ENCODE measurements at regions of chr15 and their contacts with region 1.

Region 1: DNA sequence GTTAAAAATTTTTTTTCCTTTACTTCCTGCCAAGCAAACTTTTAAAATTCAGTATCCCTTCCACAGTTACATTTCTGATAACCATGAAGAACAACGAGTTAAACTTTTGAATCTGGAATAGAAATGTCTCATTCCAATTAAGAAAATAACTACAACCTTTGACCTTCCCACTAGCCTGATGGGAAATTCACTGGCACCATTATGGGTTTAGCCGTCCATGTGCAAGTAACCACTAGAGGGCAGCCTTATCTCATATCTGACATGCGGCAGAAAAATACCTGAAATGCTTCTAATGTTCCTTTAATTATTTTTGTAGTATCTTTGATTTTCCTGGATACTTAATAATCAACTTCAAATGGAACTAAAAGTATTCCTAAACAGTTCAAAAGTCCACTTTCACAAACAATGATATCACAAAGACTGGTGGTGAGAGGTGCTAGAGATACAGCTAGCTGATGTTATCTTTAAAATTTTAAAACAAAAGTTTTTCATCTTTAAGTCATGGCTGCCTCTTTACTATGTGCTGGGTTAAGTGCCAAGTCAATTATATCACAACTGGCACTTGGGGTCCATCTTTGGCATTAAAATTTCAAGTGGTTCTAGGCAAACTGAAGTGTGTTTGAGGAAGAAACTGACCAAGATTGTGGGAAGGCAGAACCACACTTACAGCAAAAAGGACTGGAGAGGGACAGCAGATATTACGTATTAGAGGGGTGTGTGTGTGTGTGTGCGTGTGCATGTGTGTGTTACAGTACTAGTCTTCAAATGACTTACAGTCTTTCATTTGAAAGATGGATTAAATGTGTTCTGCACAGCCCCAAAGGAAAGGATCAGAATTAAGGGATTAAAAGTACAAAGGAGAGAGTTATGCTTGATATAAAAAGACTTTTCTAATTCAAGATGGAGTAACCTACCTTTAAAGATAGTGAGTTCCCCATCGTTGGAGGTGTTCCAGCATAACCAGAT is 107.1 kb upstream of the ICE2 start:
- DNase-seq: peak in 1 of 2 donors; percentile 91
- ATAC-seq: peak; percentile 18 to 59 (median 33)
- H3K4me3 ChIP-seq: no peak overlapping the region
- H3K4me3 Mint-ChIP-seq: peak overlapping the region; percentile 97
- H3K27ac ChIP-seq: peak overlapping the region; percentile 68
- H3K27ac Mint-ChIP-seq: peak overlapping the region; percentile 93
- H3K4me1 ChIP-seq: peaks cover 31% of the 10 kb centered on the region
- H3K4me1 Mint-ChIP-seq: peaks cover 89 to 95% of the 10 kb centered on the region in 2 donors
- H3K27me3 ChIP-seq: no peaks in the 10 kb centered on the region
- H3K27me3 Mint-ChIP-seq: no peaks in the 10 kb centered on the region
- CTCF ChIP-seq: peak; percentile 92

Region 2: GRCh38 chr15:60507596-60508424 is 78.2 kb before region 1 on chr15:
- intact Hi-C with region 1: loop called (anchors 2 kb)
- DNase-seq: peak in 1 of 2 donors; percentile 89
- ATAC-seq: peak; percentile 93 to 94 (median 93)
- H3K4me3 ChIP-seq: no peak overlapping the region
- H3K4me3 Mint-ChIP-seq: peak overlapping the region; percentile 38
- H3K27ac ChIP-seq: peak overlapping the region; percentile 2
- H3K27ac Mint-ChIP-seq: peak overlapping the region; percentile 85 to 86
- H3K4me1 ChIP-seq: peaks cover 3% of the 10 kb centered on the region
- H3K4me1 Mint-ChIP-seq: peaks cover 25 to 50% of the 10 kb centered on the region in 2 donors
- H3K27me3 ChIP-seq: no peaks in the 10 kb centered on the region
- H3K27me3 Mint-ChIP-seq: no peaks in the 10 kb centered on the region
- CTCF ChIP-seq: peak; percentile 91

Region 3: GRCh38 chr15:60526127-60526625 is 59.9 kb before region 1 on chr15:
- intact Hi-C with region 1: no loop called
- DNase-seq: peak in 1 of 2 donors; percentile 73
- ATAC-seq: peak; percentile 19 to 63 (median 33)
- H3K4me3 ChIP-seq: no peak overlapping the region
- H3K4me3 Mint-ChIP-seq: peak overlapping the region; percentile 21
- H3K27ac ChIP-seq: peak overlapping the region; percentile 43
- H3K27ac Mint-ChIP-seq: peak overlapping the region; percentile 86 to 87
- H3K4me1 ChIP-seq: peaks cover 22% of the 10 kb centered on the region
- H3K4me1 Mint-ChIP-seq: peaks cover 65 to 71% of the 10 kb centered on the region in 2 donors
- H3K27me3 ChIP-seq: no peaks in the 10 kb centered on the region
- H3K27me3 Mint-ChIP-seq: no peaks in the 10 kb centered on the region
- CTCF ChIP-seq: no peak

Region 4: DNA sequence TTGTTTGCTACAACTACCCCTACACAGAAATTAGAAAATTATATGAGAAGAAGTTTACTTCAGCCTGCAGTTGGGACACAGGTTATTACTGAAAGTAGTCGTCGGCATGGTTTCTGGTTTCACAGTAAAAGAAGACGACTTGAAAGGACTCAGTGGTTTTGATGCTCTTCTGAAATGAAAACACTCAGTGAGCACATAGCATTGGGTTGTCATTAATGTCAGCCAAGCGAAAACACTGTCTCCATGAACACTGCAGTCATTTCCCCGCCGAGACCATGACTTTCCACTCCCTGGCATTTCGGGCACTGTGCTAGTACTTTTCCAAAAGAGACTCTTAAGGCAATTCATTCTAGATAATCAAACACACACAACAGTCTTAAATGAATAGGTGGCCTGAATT is 37.9 kb before region 1 on chr15:
- intact Hi-C with region 1: loop called (anchors 2 kb)
- DNase-seq: peak in 1 of 2 donors; percentile 68
- ATAC-seq: peak; percentile 11 to 40 (median 33)
- H3K4me3 ChIP-seq: no peak overlapping the region
- H3K4me3 Mint-ChIP-seq: peak overlapping the region; percentile 88
- H3K27ac ChIP-seq: peak overlapping the region; percentile 87
- H3K27ac Mint-ChIP-seq: peak overlapping the region; percentile 93 to 95
- H3K4me1 ChIP-seq: peaks cover 61% of the 10 kb centered on the region
- H3K4me1 Mint-ChIP-seq: peaks cover 95% of the 10 kb centered on the region in 2 donors
- H3K27me3 ChIP-seq: no peaks in the 10 kb centered on the region
- H3K27me3 Mint-ChIP-seq: no peaks in the 10 kb centered on the region
- CTCF ChIP-seq: no peak

Region 5: GRCh38 chr15:60568301-60568742 is 17.7 kb before region 1 on chr15:
- intact Hi-C with region 1: loop called (anchors 1 kb)
- DNase-seq: peak in 1 of 2 donors; percentile 41
- ATAC-seq: peak in 2 of 3 donors; percentile 6 to 8
- H3K4me3 ChIP-seq: no peak overlapping the region
- H3K4me3 Mint-ChIP-seq: peak overlapping the region; percentile 77
- H3K27ac ChIP-seq: peak overlapping the region; percentile 65
- H3K27ac Mint-ChIP-seq: peak overlapping the region; percentile 78 to 88
- H3K4me1 ChIP-seq: peaks cover 63% of the 10 kb centered on the region
- H3K4me1 Mint-ChIP-seq: peaks cover 91 to 92% of the 10 kb centered on the region in 2 donors
- H3K27me3 ChIP-seq: no peaks in the 10 kb centered on the region
- H3K27me3 Mint-ChIP-seq: no peaks in the 10 kb centered on the region
- CTCF ChIP-seq: no peak

Region 6: DNA sequence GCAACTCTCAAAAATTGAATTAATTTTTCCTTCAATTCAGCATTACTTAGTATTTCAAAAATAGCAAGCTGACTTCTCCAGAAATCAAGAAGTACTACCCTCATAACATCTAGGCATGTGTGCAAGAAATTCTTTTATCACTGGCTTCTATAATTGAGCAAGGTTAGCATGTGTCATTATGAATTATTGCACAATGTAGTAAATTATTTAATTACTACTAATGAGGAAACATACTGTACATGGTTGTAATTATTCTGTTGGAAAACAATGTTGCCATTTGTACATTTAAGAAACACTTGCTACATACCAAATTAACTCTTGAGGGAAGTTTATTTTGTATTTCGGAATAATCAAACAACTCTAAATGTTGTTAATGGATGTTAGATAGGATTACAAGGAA is 15.1 kb after region 1 on chr15:
- intact Hi-C with region 1: no loop called
- DNase-seq: no peak
- ATAC-seq: no peak
- H3K4me3 ChIP-seq: no peak overlapping the region
- H3K4me3 Mint-ChIP-seq: no peak overlapping the region
- H3K27ac ChIP-seq: no peak overlapping the region
- H3K27ac Mint-ChIP-seq: no peak overlapping the region
- H3K4me1 ChIP-seq: no peaks in the 10 kb centered on the region
- H3K4me1 Mint-ChIP-seq: peaks cover 0 to 7% of the 10 kb centered on the region in 2 donors
- H3K27me3 ChIP-seq: no peaks in the 10 kb centered on the region
- H3K27me3 Mint-ChIP-seq: peaks cover 0 to 7% of the 10 kb centered on the region in 2 donors
- CTCF ChIP-seq: no peak

Region 7: DNA sequence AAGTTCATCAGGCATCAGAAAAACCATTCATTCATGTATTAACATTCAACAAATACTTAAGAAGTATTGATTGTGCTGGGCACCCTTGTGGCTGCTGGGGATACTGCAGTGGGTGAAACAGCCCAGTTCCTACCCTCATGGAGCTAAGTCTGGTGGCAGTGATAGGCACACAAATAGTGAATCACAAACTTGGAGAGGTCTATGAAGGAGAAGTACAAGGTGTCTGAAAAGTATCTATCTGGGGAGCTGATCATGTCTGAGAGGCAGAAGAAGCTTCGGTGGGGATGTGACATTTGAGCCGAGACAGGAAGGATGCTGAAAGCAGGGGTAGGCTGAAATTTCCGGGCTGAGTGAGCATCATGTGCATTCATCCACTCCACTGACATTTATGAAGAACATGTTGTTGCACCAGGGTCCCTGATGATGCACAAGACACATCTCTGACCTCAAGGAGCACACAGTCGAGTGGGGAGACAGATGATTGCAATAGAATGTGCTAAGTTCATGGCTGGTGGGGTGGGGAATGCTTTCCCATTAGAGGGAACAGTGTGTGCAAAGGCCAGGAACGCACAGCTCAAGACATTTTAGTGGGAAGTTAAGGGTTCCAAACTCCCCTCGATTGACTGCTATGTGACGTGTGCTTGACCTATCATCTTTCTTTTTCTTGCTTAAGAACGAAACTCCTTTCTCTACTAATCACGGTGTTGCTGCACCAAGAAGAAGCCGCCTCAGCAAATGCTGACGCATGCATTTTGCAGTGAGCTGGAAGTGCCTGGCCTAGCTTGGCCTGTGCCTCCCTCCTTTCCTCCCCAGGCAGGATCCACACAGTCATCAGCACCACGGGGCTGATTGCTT is 202.0 kb after region 1 on chr15:
- intact Hi-C with region 1: no loop called
- DNase-seq: peak in 1 of 2 donors; percentile 66
- ATAC-seq: peak in 1 of 3 donors; percentile 64
- H3K4me3 ChIP-seq: no peak overlapping the region
- H3K4me3 Mint-ChIP-seq: no peak overlapping the region
- H3K27ac ChIP-seq: no peak overlapping the region
- H3K27ac Mint-ChIP-seq: no peak overlapping the region
- H3K4me1 ChIP-seq: no peaks in the 10 kb centered on the region
- H3K4me1 Mint-ChIP-seq: peaks cover 9 to 15% of the 10 kb centered on the region in 2 donors
- H3K27me3 ChIP-seq: no peaks in the 10 kb centered on the region
- H3K27me3 Mint-ChIP-seq: no peaks in the 10 kb centered on the region
- CTCF ChIP-seq: peak; percentile 44

Region 8: GRCh38 chr15:60840306-60840702 is 254.3 kb after region 1 on chr15:
- intact Hi-C with region 1: loop called (anchors 1 kb)
- DNase-seq: peak in 1 of 2 donors; percentile 53
- ATAC-seq: peak in 1 of 3 donors; percentile 2
- H3K4me3 ChIP-seq: no peak overlapping the region
- H3K4me3 Mint-ChIP-seq: peak overlapping the region; percentile 90
- H3K27ac ChIP-seq: peak overlapping the region; percentile 81
- H3K27ac Mint-ChIP-seq: peak overlapping the region; percentile 87 to 95
- H3K4me1 ChIP-seq: peaks cover 67% of the 10 kb centered on the region
- H3K4me1 Mint-ChIP-seq: peaks cover 72 to 74% of the 10 kb centered on the region in 2 donors
- H3K27me3 ChIP-seq: no peaks in the 10 kb centered on the region
- H3K27me3 Mint-ChIP-seq: no peaks in the 10 kb centered on the region
- CTCF ChIP-seq: no peak

Region 9: GRCh38 chr15:61474796-61475195 is 888.8 kb after region 1 on chr15:
- intact Hi-C with region 1: no loop called
- DNase-seq: no peak
- ATAC-seq: no peak
- H3K4me3 ChIP-seq: no peak overlapping the region
- H3K4me3 Mint-ChIP-seq: no peak overlapping the region
- H3K27ac ChIP-seq: no peak overlapping the region
- H3K27ac Mint-ChIP-seq: no peak overlapping the region
- H3K4me1 ChIP-seq: no peaks in the 10 kb centered on the region
- H3K4me1 Mint-ChIP-seq: no peaks in the 10 kb centered on the region
- H3K27me3 ChIP-seq: no peaks in the 10 kb centered on the region
- H3K27me3 Mint-ChIP-seq: peaks cover 11 to 25% of the 10 kb centered on the region in 2 donors
- CTCF ChIP-seq: no peak

Region 10: GRCh38 chr15:61834076-61834697 is 1248.2 kb after region 1 on chr15:
- intact Hi-C with region 1: loop called (anchors 10 kb)
- DNase-seq: peak; percentile 63 to 82
- ATAC-seq: peak; percentile 76 to 86 (median 81)
- H3K4me3 ChIP-seq: no peak overlapping the region
- H3K4me3 Mint-ChIP-seq: no peak overlapping the region
- H3K27ac ChIP-seq: no peak overlapping the region
- H3K27ac Mint-ChIP-seq: no peak overlapping the region
- H3K4me1 ChIP-seq: peaks cover 14% of the 10 kb centered on the region
- H3K4me1 Mint-ChIP-seq: peaks cover 15 to 21% of the 10 kb centered on the region in 2 donors
- H3K27me3 ChIP-seq: peaks cover 3% of the 10 kb centered on the region
- H3K27me3 Mint-ChIP-seq: peaks cover 5 to 15% of the 10 kb centered on the region in 2 donors
- CTCF ChIP-seq: peak; percentile 95

Measured in natural killer cell (primary cell).